AG04450 (cell line): ENCODE measurements at regions of chr20 and their contacts with region 1.

Region 1: GRCh38 chr20:35856866-35857265 is 85.1 kb downstream of the PHF20 start:
- DNase-seq: no peak
- H3K4me3 ChIP-seq: no peak overlapping the region
- H3K27ac ChIP-seq: no peak overlapping the region
- H3K27me3 ChIP-seq: no peaks in the 10 kb centered on the region
- CTCF ChIP-seq: no peak

Region 2: GRCh38 chr20:35821807-35822242 is 35.0 kb before region 1 on chr20:
- CTCF ChIA-PET with region 1: no interaction called
- POLR2A ChIA-PET with region 1: no interaction called
- DNase-seq: no peak
- H3K4me3 ChIP-seq: no peak overlapping the region
- H3K27ac ChIP-seq: peak overlapping the region; percentile 68
- H3K27me3 ChIP-seq: no peaks in the 10 kb centered on the region
- CTCF ChIP-seq: no peak

Region 3: GRCh38 chr20:35845561-35845960 is 11.3 kb before region 1 on chr20:
- CTCF ChIA-PET with region 1: interaction called, 4 read pairs
- POLR2A ChIA-PET with region 1: interaction called, 12 read pairs
- DNase-seq: no peak
- H3K4me3 ChIP-seq: no peak overlapping the region
- H3K27ac ChIP-seq: no peak overlapping the region
- H3K27me3 ChIP-seq: no peaks in the 10 kb centered on the region
- CTCF ChIP-seq: no peak